Left cardiac atrium (tissue), 4 donors: ENCODE measurements at regions of chr17 and their contacts with region 1.

Region 1: DNA sequence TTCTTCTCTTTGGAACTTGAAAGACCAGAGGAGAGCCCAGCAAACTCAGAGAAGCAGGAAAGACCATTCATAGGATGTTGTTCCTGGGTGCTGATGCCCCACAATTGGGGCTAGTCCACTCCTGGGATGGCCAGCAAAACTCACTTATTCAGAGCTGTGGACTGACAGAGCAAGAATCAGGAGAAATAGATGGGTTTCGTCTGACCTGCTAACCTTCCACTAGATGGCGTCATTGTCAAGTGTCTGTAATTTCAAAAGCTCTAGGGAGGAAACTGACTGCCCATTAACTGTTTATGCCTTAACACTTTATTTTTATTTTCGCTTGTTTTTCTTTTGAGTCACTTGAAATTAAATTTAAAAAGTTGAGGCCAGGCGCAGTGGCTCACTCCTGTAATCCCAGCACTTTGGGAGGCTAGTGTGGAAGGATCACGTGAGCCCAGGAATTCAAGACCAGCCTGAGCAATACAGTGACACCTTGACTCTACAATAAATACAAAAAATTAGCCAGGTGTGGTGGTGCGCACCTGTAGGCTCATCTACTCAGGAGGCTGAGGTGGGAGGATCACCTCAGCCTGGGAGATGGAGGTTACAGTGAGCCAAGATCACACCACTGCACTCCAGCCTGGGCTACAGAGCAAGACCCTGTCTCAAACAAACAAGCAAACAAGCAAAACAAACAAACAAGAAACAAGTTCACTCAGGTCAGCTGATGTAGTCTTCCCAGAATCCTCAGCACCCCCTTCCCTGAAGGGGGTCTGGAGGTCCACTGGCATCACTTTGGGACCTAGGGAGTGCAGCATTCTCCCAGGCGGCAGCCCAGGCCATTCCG is 28.6 kb upstream of the MILR1 start:
- DNase-seq: no peak
- ATAC-seq: peak; percentile 84

Region 2: DNA sequence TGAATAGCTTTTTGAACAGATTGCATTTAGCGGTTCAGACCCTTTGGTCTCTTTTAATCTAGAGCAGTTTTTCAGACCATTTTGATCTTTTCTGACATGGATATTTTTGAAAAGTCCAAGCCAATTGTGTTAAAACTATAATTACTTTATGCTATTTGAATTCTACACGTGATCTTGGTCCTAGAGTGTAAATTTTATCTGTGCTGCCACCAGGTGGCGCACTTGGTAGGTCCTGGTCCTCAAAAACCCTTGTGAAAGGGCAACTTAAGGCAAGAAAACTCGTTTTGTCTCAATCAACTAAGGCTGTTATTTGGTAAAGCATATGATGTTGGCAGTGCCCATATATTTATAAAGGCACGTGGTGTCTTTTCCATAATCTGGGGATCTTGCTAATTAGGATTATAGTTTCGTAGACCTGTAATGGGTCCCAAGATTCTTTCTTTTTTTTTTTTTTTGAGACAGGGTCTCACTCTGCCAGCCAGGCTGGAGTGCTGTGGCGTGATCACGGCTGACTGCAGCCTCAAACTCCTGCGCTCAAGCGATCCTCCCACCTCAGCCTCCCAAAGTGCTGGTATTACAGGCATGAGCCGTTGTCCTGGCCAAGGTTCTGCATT is 113.4 kb before region 1 on chr17:
- intact Hi-C with region 1: loop called in 1 of 2 experiments (anchors 5 kb)
- DNase-seq: peak; percentile 72
- ATAC-seq: peak; percentile 50 to 60

Region 3: DNA sequence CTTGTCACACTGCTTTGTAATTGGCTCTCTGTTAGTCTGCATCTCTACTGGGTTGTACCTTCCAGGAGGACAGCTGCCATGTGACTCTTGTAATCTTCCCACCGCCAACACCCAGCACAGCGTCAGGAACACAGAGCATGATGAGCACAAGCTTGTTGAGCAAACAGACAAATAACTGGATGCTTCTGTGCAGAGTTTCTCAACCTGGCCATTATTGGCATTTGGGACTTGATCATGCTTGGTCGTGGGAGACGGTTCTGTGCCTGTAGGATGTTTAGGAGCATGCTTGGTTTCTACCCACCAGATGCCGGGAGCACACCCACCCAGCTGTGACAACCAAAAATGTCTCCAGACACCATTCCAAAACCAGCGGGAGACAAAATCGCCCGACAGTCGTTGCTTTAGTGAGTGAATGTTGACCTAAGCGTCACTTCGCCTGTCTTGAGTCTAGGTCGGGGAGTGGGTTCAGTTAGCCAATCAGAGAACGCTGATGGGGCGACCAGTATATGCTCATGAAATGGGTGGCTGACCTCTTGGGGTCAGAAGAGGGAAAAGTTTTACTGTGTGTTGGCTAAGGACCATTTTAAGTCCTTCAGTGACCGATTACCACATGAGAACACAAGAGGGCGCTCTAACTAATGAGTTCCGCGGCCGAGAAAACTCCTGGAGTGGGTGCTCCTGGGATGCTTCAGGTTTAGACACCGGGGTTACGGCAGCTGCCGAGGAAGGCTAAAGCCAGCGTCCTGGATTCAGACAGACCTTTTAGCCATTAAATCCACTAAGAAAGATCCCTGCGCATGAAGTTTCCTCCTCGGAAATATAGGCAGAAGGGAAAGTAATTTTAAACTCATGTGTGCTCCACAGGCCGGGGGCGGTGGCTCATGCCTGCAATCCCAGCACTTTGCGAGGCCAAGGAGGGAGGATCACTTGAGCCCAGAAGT is 99.5 kb before region 1 on chr17:
- intact Hi-C with region 1: loop called (anchors 5 kb)
- DNase-seq: peak; percentile 60
- ATAC-seq: peak; percentile 71 to 86

Region 4: DNA sequence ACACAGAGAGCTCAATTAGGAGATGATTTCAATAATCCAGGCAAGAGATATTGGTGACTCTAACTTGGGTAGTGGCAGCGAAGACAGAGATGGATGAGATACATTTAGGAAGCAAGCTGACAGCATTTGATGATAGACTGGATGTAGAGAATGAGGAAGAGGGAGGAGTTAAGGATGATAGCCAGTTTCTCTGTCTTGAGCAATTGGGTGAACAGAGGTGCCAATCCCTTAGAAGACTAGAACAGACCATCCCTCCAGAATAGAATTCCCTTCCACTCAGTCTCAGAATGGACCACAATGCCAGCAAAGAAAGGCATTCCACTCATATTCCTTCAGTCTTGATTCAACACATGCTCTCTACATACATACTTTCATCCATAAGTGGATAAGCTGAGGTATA is 59.3 kb after region 1 on chr17:
- intact Hi-C with region 1: loop called in 1 of 2 experiments (anchors 10 kb)
- DNase-seq: no peak
- ATAC-seq: no peak

Region 5: GRCh38 chr17:64491034-64491859 is 70.9 kb after region 1 on chr17:
- intact Hi-C with region 1: loop called (anchors 5 to 10 kb)
- DNase-seq: no peak
- ATAC-seq: peak in 1 of 2 donors; percentile 48